Activated CD4-positive, alpha-beta memory T cell treated with anti-CD3 and anti-CD28 coated beads for 36 hours (primary cell): ENCODE measurements at regions of chr14 and their contacts with region 1.

Region 1: DNA sequence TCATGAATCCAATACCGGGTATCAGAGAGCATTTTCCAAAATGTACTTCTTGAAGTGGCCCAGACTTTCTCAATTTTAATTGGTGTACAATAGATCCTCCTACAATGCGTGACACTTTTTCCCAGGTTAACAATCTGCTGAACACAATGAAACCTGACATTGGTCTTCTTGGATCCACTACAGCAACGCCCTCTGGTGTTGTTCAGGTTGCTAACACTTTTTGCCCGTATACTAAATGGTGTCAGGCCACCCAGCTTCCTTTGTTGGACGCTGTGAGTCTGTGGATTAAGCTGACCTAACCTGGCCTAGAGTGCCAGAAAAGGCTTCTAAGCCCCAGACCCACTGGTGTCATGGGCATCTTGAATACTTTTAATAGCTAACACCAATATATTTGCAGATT is 89.2 kb downstream of the KCNK10 start:
- DNase-seq: peak; percentile 10
- H3K4me3 Mint-ChIP-seq: no peak overlapping the region
- H3K27ac Mint-ChIP-seq: no peak overlapping the region
- H3K4me1 Mint-ChIP-seq: no peaks in the 10 kb centered on the region
- H3K27me3 Mint-ChIP-seq: peaks cover 6% of the 10 kb centered on the region

Region 2: DNA sequence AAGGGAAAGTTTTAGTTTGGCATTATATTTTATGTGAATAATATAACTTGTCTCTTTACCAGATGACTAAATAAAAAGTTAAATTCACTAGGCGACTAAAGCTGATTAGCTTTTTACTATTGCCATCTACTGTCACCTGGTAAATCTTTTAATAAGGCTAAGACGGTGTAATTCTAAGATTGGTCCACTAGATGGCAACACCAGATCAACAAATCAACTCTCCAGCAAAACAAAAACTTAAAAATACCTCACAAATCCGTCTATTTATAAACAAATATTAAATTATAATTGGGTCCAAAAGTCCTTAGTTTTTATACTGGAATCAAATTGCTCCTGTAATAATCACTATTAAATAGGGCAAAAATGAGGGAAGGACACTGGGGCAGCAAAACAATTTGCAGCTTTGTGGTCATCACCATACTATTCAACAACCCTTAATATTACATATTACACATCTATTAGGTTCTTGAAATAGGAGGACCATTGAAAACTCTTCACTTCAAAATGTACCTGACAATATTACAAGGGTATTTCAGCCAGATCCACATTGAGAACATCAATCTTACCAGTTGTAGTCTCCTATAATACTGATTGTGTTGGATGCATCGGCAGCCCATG is 288.8 kb before region 1 on chr14:
- CTCF ChIA-PET with region 1: interaction called, 19 read pairs
- POLR2A ChIA-PET with region 1: no interaction called
- intact Hi-C with region 1: loop called (anchors 5 kb)
- DNase-seq: no peak
- H3K4me3 Mint-ChIP-seq: no peak overlapping the region
- H3K27ac Mint-ChIP-seq: no peak overlapping the region
- H3K4me1 Mint-ChIP-seq: no peaks in the 10 kb centered on the region
- H3K27me3 Mint-ChIP-seq: no peaks in the 10 kb centered on the region

Region 3: DNA sequence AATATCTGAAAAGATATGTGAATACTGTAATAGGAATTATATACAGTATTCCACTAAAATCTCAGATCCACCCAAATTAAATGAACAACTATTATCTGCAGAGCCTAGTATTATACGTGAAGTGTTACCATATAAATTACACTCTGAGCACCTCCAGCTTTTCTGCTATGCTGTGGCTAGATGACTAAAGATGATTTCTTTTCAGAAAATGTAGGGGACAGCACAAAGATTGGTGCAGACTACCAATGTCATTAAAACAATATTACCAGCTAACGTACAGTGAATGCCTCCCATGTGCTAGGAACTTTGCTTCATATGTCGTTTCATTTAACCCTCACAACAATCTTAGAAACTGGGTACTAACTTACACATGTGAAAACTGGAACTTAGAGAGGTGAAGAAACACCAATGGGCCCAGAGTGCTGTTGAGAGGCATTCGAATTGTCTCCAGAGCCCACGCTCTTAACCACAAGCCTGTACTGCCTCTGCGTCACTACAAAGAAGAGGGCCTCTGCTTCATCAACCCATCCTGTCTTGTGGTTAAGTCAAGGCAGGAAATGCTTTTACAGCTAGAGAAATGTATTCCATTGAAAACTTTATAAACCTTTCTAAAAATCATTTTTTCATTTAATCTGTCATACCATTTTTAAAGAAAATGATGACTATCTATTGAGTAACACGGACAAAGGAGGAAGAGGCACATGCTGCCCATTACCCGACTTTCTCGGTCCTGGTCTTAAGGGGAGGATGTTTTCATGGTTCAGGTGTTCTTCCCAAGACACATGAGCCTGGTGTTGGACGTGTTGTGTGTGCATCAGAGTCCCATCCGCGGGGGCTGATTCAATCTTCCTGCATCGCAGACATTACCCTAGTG is 227.7 kb before region 1 on chr14:
- CTCF ChIA-PET with region 1: no interaction called
- POLR2A ChIA-PET with region 1: no interaction called
- intact Hi-C with region 1: no loop called
- DNase-seq: peak; percentile 83
- H3K4me3 Mint-ChIP-seq: peak overlapping the region; percentile 73
- H3K27ac Mint-ChIP-seq: peak overlapping the region; percentile 87
- H3K4me1 Mint-ChIP-seq: peaks cover 59% of the 10 kb centered on the region
- H3K27me3 Mint-ChIP-seq: no peaks in the 10 kb centered on the region

Region 4: GRCh38 chr14:89040460-89041259 is 806.7 kb after region 1 on chr14:
- CTCF ChIA-PET with region 1: no interaction called
- POLR2A ChIA-PET with region 1: no interaction called
- intact Hi-C with region 1: no loop called
- DNase-seq: peak; percentile 87
- H3K4me3 Mint-ChIP-seq: peak overlapping the region; percentile 62
- H3K27ac Mint-ChIP-seq: no peak overlapping the region
- H3K4me1 Mint-ChIP-seq: peaks cover 4% of the 10 kb centered on the region
- H3K27me3 Mint-ChIP-seq: peaks cover 15% of the 10 kb centered on the region